Gastrocnemius medialis (tissue), 4 donors: ENCODE measurements at regions of chr1 and their contacts with region 1.

Region 1: GRCh38 chr1:198756470-198756869 is 117.6 kb downstream of the PTPRC start:
- DNase-seq: no peak
- ATAC-seq: no peak
- H3K4me3 ChIP-seq: no peak overlapping the region
- H3K27ac ChIP-seq: no peak overlapping the region
- H3K4me1 ChIP-seq: no peaks in the 10 kb centered on the region
- H3K27me3 ChIP-seq: no peaks in the 10 kb centered on the region
- CTCF ChIP-seq: peak in 3 of 5 experiments; percentile 3 to 45 (median 11)
- POLR2A ChIP-seq: no peak

Region 2: DNA sequence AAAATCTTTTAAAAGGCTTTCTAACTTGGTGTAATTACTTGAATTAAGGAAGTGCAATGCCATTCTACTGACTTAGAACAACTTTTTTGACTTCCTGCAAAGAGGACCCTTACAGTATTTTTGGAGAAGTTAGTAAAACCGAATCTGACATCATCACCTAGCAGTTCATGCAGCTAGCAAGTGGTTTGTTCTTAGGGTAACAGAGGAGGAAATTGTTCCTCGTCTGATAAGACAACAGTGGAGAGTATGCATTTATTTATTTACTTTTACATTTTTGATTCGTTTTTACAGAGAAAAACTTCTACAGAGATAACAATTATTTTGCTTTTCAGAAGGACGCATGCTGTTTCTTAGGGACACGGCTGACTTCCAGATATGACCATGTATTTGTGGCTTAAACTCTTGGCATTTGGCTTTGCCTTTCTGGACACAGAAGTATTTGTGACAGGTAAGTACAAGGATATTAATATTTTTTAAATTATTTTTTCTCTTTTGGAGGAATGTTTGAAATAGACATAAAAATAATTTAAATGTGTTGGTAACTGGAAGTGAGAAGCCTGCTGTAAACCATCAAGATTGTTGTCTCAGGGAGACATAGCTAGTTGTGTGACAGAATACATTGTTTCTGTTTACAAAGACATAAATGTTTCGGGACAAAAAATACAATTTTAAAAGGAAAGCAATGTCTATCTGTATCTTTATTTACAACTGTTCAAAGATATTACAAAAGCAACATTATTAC is 117.4 kb before region 1 on chr1 and contains the start of gene PTPRC:
- in situ Hi-C with region 1: no loop called
- intact Hi-C with region 1: no loop called
- DNase-seq: no peak
- ATAC-seq: no peak
- H3K4me3 ChIP-seq: peak within 1 kb of the TSS in 1 of 4 donors; percentile 27
- H3K27ac ChIP-seq: no peak within 1 kb of the TSS
- H3K4me1 ChIP-seq: no peaks in the 10 kb centered on the region
- H3K27me3 ChIP-seq: no peaks in the 10 kb centered on the region
- CTCF ChIP-seq: no peak
- POLR2A ChIP-seq: no peak
- total RNA-seq, gene PTPRC: 1.7 to 10.4 (median 5.3) TPM

Region 3: DNA sequence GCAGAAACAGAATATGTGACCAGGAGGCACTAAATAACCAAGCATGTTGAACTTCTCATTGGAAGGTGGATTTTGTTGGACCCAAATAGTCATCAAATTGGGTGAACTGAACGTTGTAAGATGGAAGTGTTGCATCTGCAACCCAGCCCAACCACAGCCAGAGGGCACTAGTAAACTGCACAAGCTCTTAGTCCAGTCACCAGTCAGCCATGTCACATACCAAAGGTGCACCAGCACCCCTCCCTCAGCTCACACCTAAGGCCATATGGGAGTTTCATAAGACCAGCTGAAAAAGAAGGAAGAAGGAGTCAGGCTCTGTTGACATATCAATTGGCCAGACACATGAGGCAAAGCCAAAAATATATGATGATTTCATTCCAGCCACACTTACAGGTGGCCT is 789.3 kb after region 1 on chr1:
- in situ Hi-C with region 1: loop called in 2 of 4 experiments (anchors 10 to 25 kb)
- intact Hi-C with region 1: loop called (anchors 10 kb)
- DNase-seq: no peak
- ATAC-seq: no peak
- H3K4me3 ChIP-seq: no peak overlapping the region
- H3K27ac ChIP-seq: no peak overlapping the region
- H3K4me1 ChIP-seq: no peaks in the 10 kb centered on the region
- H3K27me3 ChIP-seq: no peaks in the 10 kb centered on the region
- CTCF ChIP-seq: no peak
- POLR2A ChIP-seq: no peak

Region 4: GRCh38 chr1:199551967-199552565 is 795.6 kb after region 1 on chr1:
- in situ Hi-C with region 1: loop called in 2 of 4 experiments (anchors 10 to 25 kb)
- intact Hi-C with region 1: loop called (anchors 10 kb)
- DNase-seq: no peak
- ATAC-seq: no peak
- H3K4me3 ChIP-seq: no peak overlapping the region
- H3K27ac ChIP-seq: no peak overlapping the region
- H3K4me1 ChIP-seq: no peaks in the 10 kb centered on the region
- H3K27me3 ChIP-seq: no peaks in the 10 kb centered on the region
- CTCF ChIP-seq: peak in 2 of 5 experiments; percentile 14 to 44
- POLR2A ChIP-seq: no peak